ENCODE measurements at regions of chr1 and their contacts with region 1.

Region 1: GRCh38 chr1:97524211-97524610 is 396.6 kb downstream of the DPYD start:
- DNase-seq: no peak
- H3K4me3 Mint-ChIP-seq: no peak overlapping the region
- H3K27ac Mint-ChIP-seq: no peak overlapping the region
- H3K4me1 Mint-ChIP-seq: no peaks in the 10 kb centered on the region
- H3K27me3 Mint-ChIP-seq: no peaks in the 10 kb centered on the region
- CTCF ChIP-seq: no peak

Region 2: GRCh38 chr1:97137862-97138514 is 386.2 kb before region 1 on chr1:
- CTCF ChIA-PET with region 1: interaction called, 7 read pairs
- POLR2A ChIA-PET with region 1: interaction called, 3 read pairs
- intact Hi-C with region 1: loop called (anchors 1 kb)
- DNase-seq: peak; percentile 67
- H3K4me3 Mint-ChIP-seq: no peak overlapping the region
- H3K27ac Mint-ChIP-seq: no peak overlapping the region
- H3K4me1 Mint-ChIP-seq: peaks cover 24% of the 10 kb centered on the region
- H3K27me3 Mint-ChIP-seq: no peaks in the 10 kb centered on the region
- CTCF ChIP-seq: peak; percentile 64

Region 3: DNA sequence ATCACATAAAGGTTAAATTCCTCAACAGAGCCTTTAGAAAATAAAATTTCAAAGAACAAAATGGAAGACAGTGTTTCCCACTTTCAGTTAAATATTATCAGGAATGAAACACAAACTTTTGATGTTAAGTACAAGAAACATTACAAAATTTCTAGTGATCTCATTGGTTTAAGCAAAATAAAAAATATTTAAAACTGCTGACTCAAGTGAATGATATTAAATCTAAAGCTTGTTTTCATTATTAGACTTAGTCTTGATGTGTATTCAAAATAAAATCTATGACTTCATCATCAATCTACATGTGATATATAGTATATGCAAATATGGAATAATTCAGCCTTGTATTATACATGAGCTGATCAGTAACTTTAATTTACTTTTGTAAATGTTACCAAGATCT is 217.7 kb before region 1 on chr1:
- CTCF ChIA-PET with region 1: interaction called, 10 read pairs
- POLR2A ChIA-PET with region 1: no interaction called
- intact Hi-C with region 1: no loop called
- DNase-seq: no peak
- H3K4me3 Mint-ChIP-seq: no peak overlapping the region
- H3K27ac Mint-ChIP-seq: no peak overlapping the region
- H3K4me1 Mint-ChIP-seq: no peaks in the 10 kb centered on the region
- H3K27me3 Mint-ChIP-seq: no peaks in the 10 kb centered on the region
- CTCF ChIP-seq: no peak

Region 4: DNA sequence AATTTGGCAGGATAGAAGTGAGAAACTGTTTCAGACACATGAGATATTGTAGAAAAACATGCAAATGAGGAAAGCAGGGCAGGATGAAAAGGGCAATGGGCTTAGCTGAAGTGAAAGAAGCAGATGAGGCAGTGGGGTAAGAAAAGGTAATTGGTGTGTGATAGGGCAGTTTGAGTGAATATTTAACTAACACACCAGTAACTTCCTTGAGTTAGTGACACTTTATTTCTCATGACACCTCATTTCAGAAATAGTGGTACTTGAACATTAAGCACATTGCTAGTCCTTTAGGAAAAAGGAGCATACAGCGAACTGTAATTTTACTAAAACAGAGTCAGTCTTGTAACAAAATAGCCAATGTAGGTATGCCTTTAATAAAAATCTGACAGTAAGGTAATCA is 18.4 kb before region 1 on chr1:
- CTCF ChIA-PET with region 1: interaction called, 11 read pairs
- POLR2A ChIA-PET with region 1: no interaction called
- intact Hi-C with region 1: no loop called
- DNase-seq: no peak
- H3K4me3 Mint-ChIP-seq: no peak overlapping the region
- H3K27ac Mint-ChIP-seq: no peak overlapping the region
- H3K4me1 Mint-ChIP-seq: no peaks in the 10 kb centered on the region
- H3K27me3 Mint-ChIP-seq: no peaks in the 10 kb centered on the region
- CTCF ChIP-seq: no peak

Region 5: DNA sequence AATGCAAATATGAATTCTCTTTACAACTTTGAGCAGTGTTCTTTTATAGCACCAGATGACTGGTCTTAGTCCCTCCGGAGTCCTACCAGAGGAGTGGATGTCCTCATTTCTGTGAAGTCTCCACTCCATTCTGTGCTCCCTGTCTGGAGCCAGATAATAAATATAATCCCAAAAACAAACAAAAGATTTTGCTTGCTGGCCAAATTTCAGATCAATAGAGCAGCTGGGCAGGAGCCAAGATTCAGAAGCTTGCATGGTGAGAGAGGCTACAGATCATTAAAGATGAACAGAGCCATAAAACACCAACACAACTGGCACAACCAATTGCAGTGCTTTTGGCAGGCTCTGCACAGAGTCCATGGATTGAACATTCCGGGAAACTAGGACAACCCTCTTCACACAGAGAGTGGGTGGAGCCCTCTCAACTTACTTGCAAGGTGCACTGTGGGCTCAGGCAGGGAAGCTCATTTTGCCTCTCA is 905.8 kb after region 1 on chr1:
- CTCF ChIA-PET with region 1: no interaction called
- POLR2A ChIA-PET with region 1: no interaction called
- intact Hi-C with region 1: no loop called
- DNase-seq: no peak
- H3K4me3 Mint-ChIP-seq: no peak overlapping the region
- H3K27ac Mint-ChIP-seq: no peak overlapping the region
- H3K4me1 Mint-ChIP-seq: no peaks in the 10 kb centered on the region
- H3K27me3 Mint-ChIP-seq: no peaks in the 10 kb centered on the region
- CTCF ChIP-seq: no peak